ENCODE measurements at regions of chr2 and their contacts with region 1.

Region 1: DNA sequence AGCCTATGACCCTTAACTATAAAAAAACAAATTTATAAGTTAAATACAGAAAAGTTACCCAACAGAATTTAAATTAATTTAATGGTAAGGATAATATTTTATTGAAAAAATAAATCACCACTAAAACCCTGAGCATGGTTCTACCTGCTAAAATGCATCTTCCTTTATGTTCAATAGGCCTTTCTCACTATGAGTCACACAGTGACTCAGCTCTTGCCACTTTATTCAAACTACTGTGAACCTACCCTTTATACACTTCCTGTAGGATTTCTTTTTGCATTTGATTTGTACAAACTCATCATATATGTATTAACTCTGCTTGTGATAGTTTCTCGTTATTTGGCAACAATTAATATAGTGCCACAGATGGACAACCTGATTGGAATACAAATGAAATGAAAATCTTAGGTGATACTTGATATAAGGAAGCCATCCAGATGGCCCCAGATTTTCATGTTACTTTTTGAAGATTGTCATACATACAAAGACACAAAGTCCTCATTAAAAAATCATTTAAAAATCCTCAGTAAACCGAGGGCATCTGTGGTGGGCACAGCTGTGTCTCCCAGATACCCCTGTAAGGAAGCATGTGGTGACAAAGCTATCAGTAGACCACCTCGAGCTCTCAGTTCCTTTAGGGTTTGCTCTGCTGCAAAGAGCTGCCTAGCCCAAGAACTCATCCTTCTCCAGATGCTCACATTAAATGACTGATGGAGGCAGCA is 55.2 kb upstream of the COBLL1 start:
- DNase-seq: no peak
- ATAC-seq: peak; percentile 97
- H3K4me3 Mint-ChIP-seq: no peak overlapping the region
- H3K27ac Mint-ChIP-seq: peak overlapping the region; percentile 68
- H3K4me1 Mint-ChIP-seq: peaks cover 19% of the 10 kb centered on the region
- H3K27me3 Mint-ChIP-seq: no peaks in the 10 kb centered on the region
- CTCF ChIP-seq: no peak

Region 2: DNA sequence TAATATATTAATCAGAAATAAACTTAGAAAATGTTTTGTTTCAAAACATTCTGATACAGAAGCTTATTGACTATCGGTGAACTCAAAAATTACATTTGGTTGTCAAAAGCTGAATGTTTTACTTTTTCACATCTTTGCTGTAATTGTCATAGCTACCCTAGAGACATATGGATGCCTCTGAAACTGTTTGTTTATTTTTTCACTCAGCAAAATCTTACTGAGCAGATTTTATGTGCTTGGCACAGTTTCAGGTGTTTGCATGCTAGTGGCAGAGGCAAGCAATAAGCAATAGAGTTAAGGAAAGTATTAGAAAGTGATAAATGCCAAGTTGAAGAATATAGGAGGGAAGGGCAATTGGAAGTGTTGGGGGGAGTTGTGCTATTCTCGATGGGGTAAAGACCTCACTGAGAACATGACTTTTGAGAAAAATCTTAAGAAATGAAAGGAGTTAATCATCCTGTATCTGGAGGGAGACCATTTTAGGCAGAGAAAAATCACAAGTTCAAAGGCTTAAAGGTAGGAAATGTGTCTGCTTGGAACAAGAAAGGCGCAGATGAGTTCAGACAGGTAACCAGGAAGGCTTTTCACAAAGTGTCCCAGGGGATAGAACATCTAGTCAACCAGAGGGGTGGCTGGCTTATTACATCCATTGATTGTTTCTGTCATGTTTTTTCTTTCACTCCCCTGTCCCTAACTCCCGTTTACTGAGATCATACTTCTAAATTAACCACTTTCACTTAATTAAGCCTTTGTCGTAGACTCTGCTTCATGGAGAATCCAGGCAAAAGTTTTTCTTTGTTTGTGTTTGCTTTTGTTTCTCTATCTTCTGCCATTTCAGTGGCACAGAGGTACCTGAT is 28.0 kb before region 1 on chr2:
- CTCF ChIA-PET with region 1: no interaction called
- POLR2A ChIA-PET with region 1: interaction called, 4 read pairs
- intact Hi-C with region 1: loop called (anchors 2 kb)
- DNase-seq: no peak
- ATAC-seq: no peak
- H3K4me3 Mint-ChIP-seq: no peak overlapping the region
- H3K27ac Mint-ChIP-seq: peak overlapping the region; percentile 32
- H3K4me1 Mint-ChIP-seq: peaks cover 41% of the 10 kb centered on the region
- H3K27me3 Mint-ChIP-seq: no peaks in the 10 kb centered on the region
- CTCF ChIP-seq: no peak

Region 3: DNA sequence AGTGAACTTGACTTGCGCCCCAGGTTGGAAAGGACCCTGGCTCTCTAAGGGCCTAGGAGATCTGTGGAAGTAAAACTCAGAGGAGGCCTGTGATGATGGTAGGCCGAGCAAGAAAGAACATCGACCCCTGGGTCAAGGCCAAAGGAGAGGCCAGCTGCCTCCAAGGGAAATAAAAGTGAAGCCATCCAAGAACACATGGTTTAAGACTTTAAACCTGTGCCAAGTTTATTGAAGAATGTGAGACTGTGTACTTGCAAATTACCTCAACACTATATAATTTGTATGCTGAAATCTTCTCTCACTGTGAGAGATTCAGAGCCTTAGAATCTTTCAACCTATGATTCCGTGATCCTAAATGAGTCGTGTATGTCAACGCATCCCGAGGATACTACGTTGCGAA is 14.5 kb before region 1 on chr2:
- CTCF ChIA-PET with region 1: interaction called, 3 read pairs
- POLR2A ChIA-PET with region 1: no interaction called
- intact Hi-C with region 1: loop called (anchors 2 kb)
- DNase-seq: no peak
- ATAC-seq: no peak
- H3K4me3 Mint-ChIP-seq: no peak overlapping the region
- H3K27ac Mint-ChIP-seq: peak overlapping the region; percentile 27
- H3K4me1 Mint-ChIP-seq: peaks cover 4% of the 10 kb centered on the region
- H3K27me3 Mint-ChIP-seq: no peaks in the 10 kb centered on the region
- CTCF ChIP-seq: no peak